CD14-positive monocyte (primary cell): ENCODE measurements at regions of chr22 and their contacts with region 1.

Region 1: GRCh38 chr22:41621099-41621910 is at the start of gene XRCC6:
- DNase-seq: peak; percentile 100
- H3K4me3 ChIP-seq: peak within 1 kb of the TSS; percentile 85 to 100 (median 86)
- H3K4me3 Mint-ChIP-seq: peak within 1 kb of the TSS; percentile 94 to 95
- H3K27ac ChIP-seq: peak within 1 kb of the TSS; percentile 95 to 100
- H3K27ac Mint-ChIP-seq: peak within 1 kb of the TSS; percentile 97 to 100 (median 98)
- H3K4me1 ChIP-seq: peaks cover 34 to 37% of the 10 kb centered on the region in 2 donors
- H3K4me1 Mint-ChIP-seq: peaks cover 35% of the 10 kb centered on the region
- H3K27me3 ChIP-seq: no peaks in the 10 kb centered on the region
- H3K27me3 Mint-ChIP-seq: no peaks in the 10 kb centered on the region
- CTCF ChIP-seq: no peak
- polyA plus RNA-seq, gene XRCC6: 58.6 to 286 (median 267) TPM

Region 2: DNA sequence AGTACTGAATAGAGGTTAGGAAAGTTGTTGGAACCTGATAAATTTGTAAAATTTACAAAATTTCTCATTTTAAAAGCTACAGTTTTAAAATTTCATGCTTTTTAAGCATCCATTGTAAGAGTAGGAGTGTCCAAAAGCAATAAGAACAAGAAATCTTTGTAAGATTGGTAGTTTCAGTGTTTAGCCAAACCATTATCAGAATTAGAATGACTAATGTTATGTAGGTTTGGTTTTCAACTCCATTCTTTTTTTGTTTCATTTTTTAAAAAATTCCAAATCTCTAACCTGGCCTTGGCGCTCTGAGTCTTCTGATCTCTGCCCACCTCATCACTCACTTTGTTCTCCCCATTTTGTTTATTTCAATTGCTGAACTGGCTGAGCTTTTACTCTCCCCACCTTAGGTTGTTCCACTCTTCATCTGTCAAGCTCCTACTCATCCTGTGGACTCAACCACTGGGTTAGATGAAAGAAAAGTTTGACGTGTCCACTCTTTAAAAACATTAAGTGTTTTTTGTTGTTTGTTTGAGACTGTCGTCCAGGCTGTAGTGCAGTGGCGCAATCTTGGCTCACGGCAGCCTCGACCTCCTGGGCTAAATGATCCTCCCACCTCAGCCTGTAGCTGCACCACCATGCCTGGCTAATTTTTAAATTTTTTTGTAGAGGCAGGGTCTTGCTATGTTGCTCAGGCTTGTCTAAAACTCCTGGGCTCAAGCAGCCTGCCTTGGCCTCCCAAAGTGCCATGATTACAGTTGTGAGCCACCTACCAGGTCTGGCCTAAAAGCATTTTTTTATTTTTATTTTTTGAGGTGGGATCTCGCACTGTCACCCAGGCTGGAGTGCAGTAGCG is 515.0 kb before region 1 on chr22:
- intact Hi-C with region 1: no loop called
- DNase-seq: no peak
- H3K4me3 ChIP-seq: no peak overlapping the region
- H3K4me3 Mint-ChIP-seq: no peak overlapping the region
- H3K27ac ChIP-seq: peak overlapping the region in 1 of 2 donors; percentile 61
- H3K27ac Mint-ChIP-seq: peak overlapping the region; percentile 7 to 75 (median 50)
- H3K4me1 ChIP-seq: peaks cover 0 to 4% of the 10 kb centered on the region in 2 donors
- H3K4me1 Mint-ChIP-seq: peaks cover 18% of the 10 kb centered on the region
- H3K27me3 ChIP-seq: no peaks in the 10 kb centered on the region
- H3K27me3 Mint-ChIP-seq: no peaks in the 10 kb centered on the region
- CTCF ChIP-seq: no peak

Region 3: DNA sequence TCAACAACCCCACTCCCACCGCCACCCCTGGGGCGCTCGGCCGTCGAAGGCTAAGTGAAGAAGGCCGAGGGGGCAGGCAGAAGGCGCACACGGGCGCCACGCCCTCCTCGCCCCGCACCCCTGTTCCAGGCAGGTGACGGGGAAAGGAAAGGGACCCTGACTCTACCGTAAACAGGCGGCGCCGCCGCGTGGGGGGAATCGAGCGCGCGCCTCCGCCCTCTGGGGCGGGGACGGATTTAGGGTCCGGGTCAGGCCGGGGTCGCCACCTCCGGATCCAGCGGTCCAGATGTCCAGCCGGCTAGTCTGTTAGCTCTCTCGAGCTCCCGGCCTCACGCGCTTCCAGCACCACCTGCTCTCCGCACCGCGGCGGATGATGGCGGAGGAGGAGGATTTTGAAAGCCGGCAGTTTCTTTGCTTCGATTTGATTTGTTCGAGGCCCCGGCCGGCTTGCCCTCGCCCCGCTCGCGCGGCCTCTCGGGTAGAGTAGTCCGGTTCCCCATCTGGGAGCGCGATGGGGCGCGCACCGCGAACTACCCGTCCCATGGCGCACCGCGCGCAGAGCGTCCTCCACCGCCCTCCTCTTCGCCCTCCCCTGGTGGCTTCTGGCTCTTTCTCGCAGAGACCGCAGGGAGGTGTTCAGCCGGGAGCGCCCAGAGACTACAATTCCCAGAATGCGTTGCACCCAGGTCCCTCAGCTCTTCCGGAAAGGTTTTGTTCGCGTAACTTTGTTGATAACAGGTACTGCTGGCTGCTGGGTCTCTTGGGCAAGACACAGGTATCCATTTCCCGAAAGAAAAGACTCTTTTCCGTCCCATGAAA is 335.3 kb before region 1 on chr22 and contains the start of gene RANGAP1:
- intact Hi-C with region 1: loop called in 1 of 2 experiments (anchors 2 kb)
- DNase-seq: peak; percentile 96 to 98 (median 98)
- H3K4me3 ChIP-seq: peak within 1 kb of the TSS; percentile 90 to 99 (median 96)
- H3K4me3 Mint-ChIP-seq: peak within 1 kb of the TSS; percentile 80 to 94
- H3K27ac ChIP-seq: peak within 1 kb of the TSS; percentile 67 to 97
- H3K27ac Mint-ChIP-seq: peak within 1 kb of the TSS; percentile 95 to 99 (median 98)
- H3K4me1 ChIP-seq: peaks cover 25 to 33% of the 10 kb centered on the region in 2 donors
- H3K4me1 Mint-ChIP-seq: peaks cover 34% of the 10 kb centered on the region
- H3K27me3 ChIP-seq: no peaks in the 10 kb centered on the region
- H3K27me3 Mint-ChIP-seq: peaks cover 0 to 5% (median 0%) of the 10 kb centered on the region in 3 donors
- CTCF ChIP-seq: peak; percentile 4
- polyA plus RNA-seq, gene RANGAP1: 8.3 to 30.2 (median 8.5) TPM

Region 4: DNA sequence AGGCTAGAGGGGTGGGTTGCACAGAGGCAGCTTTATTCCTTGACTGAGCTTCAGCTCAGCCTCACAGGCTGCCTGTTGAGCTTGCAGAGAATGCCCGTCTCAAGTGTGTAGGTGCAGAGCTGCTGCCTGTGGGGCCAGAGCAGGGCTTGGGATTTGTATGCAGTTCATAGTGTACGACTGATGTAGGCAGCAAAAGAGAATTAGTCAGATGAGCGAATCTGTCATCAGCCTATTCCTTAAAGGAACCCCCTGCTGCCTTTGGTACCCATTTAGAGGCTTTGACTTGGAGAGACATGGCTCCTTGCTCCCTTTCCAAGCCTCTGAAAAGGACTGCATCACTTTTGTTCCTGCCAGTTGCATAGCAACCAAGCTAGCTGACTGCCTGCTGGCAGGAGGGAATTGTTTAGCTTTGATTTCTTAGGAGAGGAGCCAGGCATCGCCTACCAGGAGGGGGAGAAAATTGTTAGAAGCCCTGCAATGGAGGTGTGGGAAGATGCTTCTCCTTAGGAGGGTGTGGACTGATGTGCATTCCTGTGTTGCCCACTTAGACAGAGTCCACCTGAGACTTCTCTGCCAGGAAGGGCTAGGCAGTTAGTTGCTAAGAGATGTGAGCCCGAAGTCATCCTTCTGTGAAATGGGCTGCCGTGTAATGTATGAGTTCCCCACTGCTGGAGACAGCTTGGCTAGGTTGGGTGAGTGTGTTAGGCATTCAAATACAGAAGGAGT is 141.5 kb before region 1 on chr22:
- intact Hi-C with region 1: loop called in 1 of 2 experiments (anchors 10 kb)
- DNase-seq: no peak
- H3K4me3 ChIP-seq: no peak overlapping the region
- H3K4me3 Mint-ChIP-seq: no peak overlapping the region
- H3K27ac ChIP-seq: no peak overlapping the region
- H3K27ac Mint-ChIP-seq: peak overlapping the region in 2 of 7 donors; percentile 8 to 44
- H3K4me1 ChIP-seq: peaks cover 5 to 10% of the 10 kb centered on the region in 2 donors
- H3K4me1 Mint-ChIP-seq: peaks cover 30% of the 10 kb centered on the region
- H3K27me3 ChIP-seq: no peaks in the 10 kb centered on the region
- H3K27me3 Mint-ChIP-seq: no peaks in the 10 kb centered on the region
- CTCF ChIP-seq: no peak

Region 5: DNA sequence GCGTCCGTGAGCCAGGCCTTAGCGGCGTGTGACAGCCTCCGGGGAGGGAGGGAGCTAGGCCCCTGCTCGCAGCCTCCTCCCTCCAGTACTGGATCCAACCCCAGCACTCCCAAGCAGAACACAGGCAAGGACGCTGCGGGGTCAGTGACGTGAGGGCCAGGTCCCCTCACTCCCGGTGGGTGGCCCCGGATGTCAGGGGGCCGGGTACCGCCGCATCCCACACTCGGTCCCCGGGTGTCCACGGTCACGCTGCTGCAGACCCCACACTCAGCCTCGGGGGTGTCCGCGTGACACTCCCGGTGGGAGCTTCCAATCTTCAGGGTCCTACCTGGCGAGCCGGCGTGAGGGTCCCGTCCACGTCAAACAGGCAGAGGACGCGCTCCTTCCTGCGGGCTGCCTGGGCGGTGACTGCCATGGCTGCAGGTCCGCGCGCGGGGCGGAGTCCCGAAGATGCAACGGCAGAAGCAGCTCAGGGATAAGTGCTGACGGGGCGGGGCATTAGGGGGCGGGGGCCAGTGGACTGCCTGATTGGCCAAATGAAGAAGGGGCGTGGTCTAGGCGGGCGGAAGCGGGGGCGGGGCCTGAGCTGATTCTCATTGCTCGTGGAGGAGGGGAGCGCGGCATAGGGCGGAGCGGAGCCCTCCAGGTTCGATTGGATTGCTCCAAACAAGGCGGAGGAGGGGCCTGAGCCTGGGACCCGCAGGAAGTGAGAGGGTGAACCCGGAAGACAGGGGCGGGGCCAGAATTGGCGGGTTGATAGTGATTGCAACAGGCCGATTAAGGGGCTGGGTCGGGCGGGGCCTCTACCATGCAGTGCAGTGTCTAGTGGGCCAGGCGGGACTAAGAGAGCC is 31.7 kb before region 1 on chr22 and contains the start of gene PMM1:
- intact Hi-C with region 1: loop called in 1 of 2 experiments (anchors 1 kb)
- DNase-seq: peak; percentile 100
- H3K4me3 ChIP-seq: peak within 1 kb of the TSS; percentile 69 to 94 (median 71)
- H3K4me3 Mint-ChIP-seq: peak within 1 kb of the TSS; percentile 88 to 93
- H3K27ac ChIP-seq: peak within 1 kb of the TSS in 1 of 2 donors; percentile 82
- H3K27ac Mint-ChIP-seq: peak within 1 kb of the TSS; percentile 60 to 90 (median 80)
- H3K4me1 ChIP-seq: peaks cover 17 to 19% of the 10 kb centered on the region in 2 donors
- H3K4me1 Mint-ChIP-seq: peaks cover 12% of the 10 kb centered on the region
- H3K27me3 ChIP-seq: no peaks in the 10 kb centered on the region
- H3K27me3 Mint-ChIP-seq: peaks cover 1 to 4% (median 2%) of the 10 kb centered on the region in 3 donors
- CTCF ChIP-seq: no peak
- polyA plus RNA-seq, gene PMM1: 15.6 to 32.4 (median 23.5) TPM

Region 6: GRCh38 chr22:42614312-42615091 is 993.2 kb after region 1 on chr22 and contains the start of gene POLDIP3:
- intact Hi-C with region 1: loop called in 1 of 2 experiments (anchors 10 kb)
- DNase-seq: peak; percentile 98 to 99 (median 99)
- H3K4me3 ChIP-seq: peak within 1 kb of the TSS; percentile 55 to 96 (median 73)
- H3K4me3 Mint-ChIP-seq: peak within 1 kb of the TSS; percentile 87 to 96
- H3K27ac ChIP-seq: peak within 1 kb of the TSS; percentile 90 to 100
- H3K27ac Mint-ChIP-seq: peak within 1 kb of the TSS; percentile 97 to 100 (median 99)
- H3K4me1 ChIP-seq: peaks cover 50 to 67% of the 10 kb centered on the region in 2 donors
- H3K4me1 Mint-ChIP-seq: peaks cover 63% of the 10 kb centered on the region
- H3K27me3 ChIP-seq: no peaks in the 10 kb centered on the region
- H3K27me3 Mint-ChIP-seq: peaks cover 0 to 3% (median 3%) of the 10 kb centered on the region in 3 donors
- CTCF ChIP-seq: peak; percentile 25
- polyA plus RNA-seq, gene POLDIP3: 46.3 to 55.3 (median 53.8) TPM